A673 (cell line): ENCODE measurements at regions of chr1 and their contacts with region 1.

Region 1: DNA sequence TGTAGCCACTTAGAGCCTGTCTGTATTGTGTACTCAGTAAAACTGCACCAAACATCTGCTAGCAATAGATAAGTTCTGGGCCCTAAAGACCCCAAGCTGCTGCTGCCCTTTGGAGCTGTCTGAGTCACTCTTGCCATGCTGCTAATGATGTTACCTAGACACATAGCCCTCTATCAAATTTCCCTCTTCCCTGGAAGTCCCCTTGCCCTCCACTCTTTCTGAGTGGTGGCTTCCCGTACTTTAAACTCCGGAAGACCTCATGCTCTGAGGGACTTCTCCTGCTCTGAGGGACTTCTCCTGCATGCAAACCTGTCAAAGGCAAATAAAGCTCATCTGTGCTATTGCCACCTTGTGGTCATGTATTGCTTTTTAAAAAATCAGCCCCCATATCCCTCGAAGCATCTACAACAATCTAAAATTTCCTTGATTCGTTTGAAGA is 34.0 kb downstream of the FH start:
- DNase-seq: peak; percentile 24
- H3K4me3 ChIP-seq: no peak overlapping the region
- H3K27ac ChIP-seq: no peak overlapping the region
- H3K4me1 ChIP-seq: peaks cover 7% of the 10 kb centered on the region
- H3K27me3 ChIP-seq: no peaks in the 10 kb centered on the region
- CTCF ChIP-seq: peak; percentile 45; the same call in 1 of the 2 replicates

Region 2: DNA sequence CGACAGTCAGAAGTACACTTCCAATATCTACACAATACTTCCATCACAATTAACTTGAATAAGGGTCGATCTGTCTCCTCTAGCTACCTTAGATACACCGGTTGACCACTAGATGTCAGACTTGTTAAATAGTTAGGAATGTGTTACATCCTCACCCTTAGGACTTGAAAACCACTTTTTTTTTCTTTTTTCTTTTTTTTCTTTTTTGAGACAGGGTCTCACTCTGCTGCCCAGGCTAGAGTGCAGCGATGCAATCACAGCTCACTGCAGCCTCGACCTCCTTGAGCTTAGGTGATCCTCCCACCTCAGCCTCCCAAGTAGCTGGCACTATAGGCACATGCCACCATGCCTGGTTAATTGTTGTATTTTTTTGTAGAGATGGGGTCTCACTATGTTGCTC is 753.2 kb before region 1 on chr1:
- CTCF ChIA-PET with region 1: no interaction called
- POLR2A ChIA-PET with region 1: no interaction called
- intact Hi-C with region 1: loop called (anchors 5 kb)
- DNase-seq: peak; percentile 51
- H3K4me3 ChIP-seq: no peak overlapping the region
- H3K27ac ChIP-seq: no peak overlapping the region
- H3K4me1 ChIP-seq: no peaks in the 10 kb centered on the region
- H3K27me3 ChIP-seq: no peaks in the 10 kb centered on the region
- CTCF ChIP-seq: peak; percentile 58

Region 3: DNA sequence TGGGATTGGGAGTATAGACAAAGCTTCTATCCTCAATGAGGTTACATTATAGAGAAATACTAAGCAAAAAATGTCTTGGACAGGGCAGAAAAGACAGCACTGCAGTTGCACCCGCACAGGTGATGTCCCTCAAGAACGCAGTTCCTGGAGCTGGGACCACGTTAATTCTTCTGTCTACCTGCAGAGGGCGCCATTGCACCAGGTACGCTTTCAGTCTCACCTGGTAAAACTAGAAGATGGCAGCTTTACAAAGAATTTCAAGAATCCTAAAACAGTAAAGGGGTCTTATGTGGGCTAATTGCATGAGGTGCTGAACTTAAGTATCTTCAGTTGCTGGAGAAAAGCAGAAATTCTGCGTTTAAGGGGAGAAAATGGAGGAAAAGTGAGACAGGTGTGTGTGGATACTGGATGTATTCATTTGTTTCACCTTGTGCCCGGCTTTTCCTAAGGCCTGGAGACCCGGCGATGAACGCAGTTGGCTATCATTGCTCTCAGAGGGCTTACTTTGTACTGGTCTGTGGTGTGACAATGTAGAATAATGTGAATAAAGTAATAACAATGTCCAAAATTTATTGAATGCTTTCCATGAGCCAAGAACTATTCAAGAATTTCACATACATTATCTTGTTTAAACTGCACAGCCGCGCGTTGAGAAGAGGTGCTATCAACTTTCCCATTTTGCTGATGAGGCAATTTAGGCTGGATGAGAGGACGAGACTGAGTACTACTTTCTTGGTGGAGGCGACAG is 597.4 kb before region 1 on chr1:
- CTCF ChIA-PET with region 1: interaction called, 3 read pairs
- POLR2A ChIA-PET with region 1: no interaction called
- intact Hi-C with region 1: loop called (anchors 5 kb)
- DNase-seq: peak; percentile 1
- H3K4me3 ChIP-seq: no peak overlapping the region
- H3K27ac ChIP-seq: no peak overlapping the region
- H3K4me1 ChIP-seq: no peaks in the 10 kb centered on the region
- H3K27me3 ChIP-seq: no peaks in the 10 kb centered on the region
- CTCF ChIP-seq: peak; percentile 71

Region 4: GRCh38 chr1:240967070-240967724 is 518.4 kb before region 1 on chr1:
- CTCF ChIA-PET with region 1: interaction called, 3 read pairs
- POLR2A ChIA-PET with region 1: no interaction called
- intact Hi-C with region 1: loop called (anchors 10 kb)
- DNase-seq: peak; percentile 1
- H3K4me3 ChIP-seq: no peak overlapping the region
- H3K27ac ChIP-seq: no peak overlapping the region
- H3K4me1 ChIP-seq: no peaks in the 10 kb centered on the region
- H3K27me3 ChIP-seq: peaks cover 17% of the 10 kb centered on the region
- CTCF ChIP-seq: 0 out of 2 replicates have a peak, but pooled peaks have one; percentile 25

Region 5: GRCh38 chr1:241311056-241311746 is 174.4 kb before region 1 on chr1:
- CTCF ChIA-PET with region 1: no interaction called
- POLR2A ChIA-PET with region 1: no interaction called
- intact Hi-C with region 1: loop called (anchors 10 kb)
- DNase-seq: peak; percentile 2
- H3K4me3 ChIP-seq: no peak overlapping the region
- H3K27ac ChIP-seq: no peak overlapping the region
- H3K4me1 ChIP-seq: no peaks in the 10 kb centered on the region
- H3K27me3 ChIP-seq: no peaks in the 10 kb centered on the region
- CTCF ChIP-seq: 0 out of 2 replicates have a peak, but pooled peaks have one; percentile 15

Region 6: GRCh38 chr1:241423541-241424479 is 61.8 kb before region 1 on chr1:
- CTCF ChIA-PET with region 1: no interaction called
- POLR2A ChIA-PET with region 1: no interaction called
- intact Hi-C with region 1: loop called (anchors 5 kb)
- DNase-seq: peak; percentile 4
- H3K4me3 ChIP-seq: peak overlapping the region; percentile 40
- H3K27ac ChIP-seq: no peak overlapping the region
- H3K4me1 ChIP-seq: no peaks in the 10 kb centered on the region
- H3K27me3 ChIP-seq: peaks cover 36% of the 10 kb centered on the region
- CTCF ChIP-seq: no peak